Endothelial cell of umbilical vein (primary cell): ENCODE measurements at regions of chr15 and their contacts with region 1.

Region 1: GRCh38 chr15:77352887-77353286 is 67.0 kb downstream of the PEAK1 start:
- DNase-seq: no peak
- H3K4me3 ChIP-seq: no peak overlapping the region
- H3K27ac ChIP-seq: no peak overlapping the region
- H3K4me1 ChIP-seq: peaks cover 4% of the 10 kb centered on the region
- H3K27me3 ChIP-seq: no peaks in the 10 kb centered on the region
- CTCF ChIP-seq: no peak
- POLR2A ChIP-seq: no peak

Region 2: DNA sequence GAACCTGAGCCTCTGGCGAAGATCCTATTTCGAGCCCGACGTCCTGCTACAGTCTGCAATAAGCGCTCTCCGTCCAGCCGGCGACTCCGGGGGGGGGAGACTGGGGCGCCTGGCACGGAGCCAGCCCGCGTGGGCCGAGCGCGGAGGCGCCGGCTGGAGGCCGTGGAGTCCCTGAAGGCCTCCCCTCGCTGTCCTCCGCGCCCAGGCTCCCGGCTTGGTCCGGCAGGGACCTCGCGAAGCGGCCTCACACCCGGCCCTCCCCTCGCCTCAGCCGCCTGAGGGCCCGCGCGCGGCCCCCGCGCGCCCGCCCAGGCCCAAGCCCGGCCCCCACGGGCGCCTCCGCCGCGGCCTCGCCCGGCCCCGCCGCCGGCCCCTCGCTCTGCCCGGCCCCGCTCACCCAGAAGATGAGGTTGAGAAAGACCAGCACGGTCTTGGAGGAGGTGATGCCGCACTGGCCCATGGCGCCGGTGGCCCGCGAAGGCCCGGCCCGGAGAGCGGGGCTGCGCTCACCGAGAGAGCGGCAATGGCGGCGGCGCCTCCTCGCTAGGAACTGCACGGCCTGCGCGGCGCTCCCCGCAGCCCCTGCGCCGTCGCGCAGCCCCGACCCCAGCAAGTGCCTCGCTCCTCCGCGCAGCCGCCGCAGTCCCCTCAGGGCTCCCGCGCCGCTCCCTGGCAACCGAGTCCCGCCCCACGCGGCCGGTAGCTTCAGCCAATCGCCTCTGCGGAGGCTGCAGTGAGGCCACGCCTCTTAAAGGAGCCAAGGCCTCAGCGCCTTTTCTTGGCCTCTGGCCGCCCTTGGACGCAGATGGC is 282.2 kb before region 1 on chr15 and contains the start of gene TSPAN3:
- CTCF ChIA-PET with region 1: no interaction called
- POLR2A ChIA-PET with region 1: no interaction called
- dilution Hi-C with region 1: no loop called
- intact Hi-C with region 1: no loop called
- DNase-seq: peak; percentile 96
- H3K4me3 ChIP-seq: peak within 1 kb of the TSS; percentile 53 to 98 (median 90)
- H3K27ac ChIP-seq: peak within 1 kb of the TSS; percentile 81
- H3K4me1 ChIP-seq: peaks cover 35% of the 10 kb centered on the region
- H3K27me3 ChIP-seq: peaks cover 4% of the 10 kb centered on the region in 2 experiments
- CTCF ChIP-seq: no peak
- POLR2A ChIP-seq: peak; percentile 70
- total RNA-seq, gene TSPAN3: 202 and 215 TPM in 2 replicates

Region 3: DNA sequence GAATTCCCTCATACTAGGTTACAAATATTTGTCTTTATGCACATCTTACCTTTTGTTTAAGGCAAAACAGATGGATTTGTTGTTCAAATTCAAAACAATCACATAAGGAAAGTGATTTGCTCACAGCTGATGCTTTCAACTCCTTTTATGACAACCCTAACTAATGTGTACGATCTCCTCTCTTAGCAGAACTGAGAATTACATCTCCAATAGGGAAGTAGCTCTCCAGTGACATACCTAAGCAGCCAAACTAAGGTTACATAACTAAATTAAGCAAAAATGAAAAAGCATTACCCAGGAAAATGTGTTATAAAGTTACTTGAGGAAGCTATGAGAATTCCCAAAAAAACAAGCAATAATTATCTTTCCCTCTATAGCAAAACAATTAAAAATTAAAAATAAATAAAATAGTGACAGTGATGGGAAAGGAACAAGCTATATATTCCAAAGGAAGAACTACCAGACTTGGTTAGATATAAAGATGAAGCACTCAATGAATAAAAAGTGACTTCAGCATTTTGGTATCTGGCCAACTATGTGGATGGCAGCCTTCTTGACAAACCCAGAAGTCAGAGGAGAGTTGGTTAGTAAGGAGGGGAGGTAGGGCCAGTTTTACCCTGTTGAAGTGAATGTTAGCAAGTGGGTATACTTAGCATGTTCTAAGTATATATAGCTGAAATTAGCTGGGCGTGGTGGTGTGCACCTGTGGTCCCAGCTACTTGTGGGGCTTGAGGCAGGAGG is 34.6 kb after region 1 on chr15:
- CTCF ChIA-PET with region 1: no interaction called
- POLR2A ChIA-PET with region 1: no interaction called
- dilution Hi-C with region 1: no loop called
- intact Hi-C with region 1: no loop called
- DNase-seq: no peak
- H3K4me3 ChIP-seq: no peak overlapping the region
- H3K27ac ChIP-seq: no peak overlapping the region
- H3K4me1 ChIP-seq: peaks cover 2% of the 10 kb centered on the region
- H3K27me3 ChIP-seq: no peaks in the 10 kb centered on the region
- CTCF ChIP-seq: no peak
- POLR2A ChIP-seq: no peak

Region 4: GRCh38 chr15:77409259-77410156 is 56.6 kb after region 1 on chr15:
- CTCF ChIA-PET with region 1: no interaction called
- POLR2A ChIA-PET with region 1: no interaction called
- dilution Hi-C with region 1: no loop called
- intact Hi-C with region 1: loop called (anchors 10 kb)
- DNase-seq: no peak
- H3K4me3 ChIP-seq: no peak overlapping the region
- H3K27ac ChIP-seq: no peak overlapping the region
- H3K4me1 ChIP-seq: no peaks in the 10 kb centered on the region
- H3K27me3 ChIP-seq: no peaks in the 10 kb centered on the region
- CTCF ChIP-seq: no peak
- POLR2A ChIP-seq: no peak

Region 5: DNA sequence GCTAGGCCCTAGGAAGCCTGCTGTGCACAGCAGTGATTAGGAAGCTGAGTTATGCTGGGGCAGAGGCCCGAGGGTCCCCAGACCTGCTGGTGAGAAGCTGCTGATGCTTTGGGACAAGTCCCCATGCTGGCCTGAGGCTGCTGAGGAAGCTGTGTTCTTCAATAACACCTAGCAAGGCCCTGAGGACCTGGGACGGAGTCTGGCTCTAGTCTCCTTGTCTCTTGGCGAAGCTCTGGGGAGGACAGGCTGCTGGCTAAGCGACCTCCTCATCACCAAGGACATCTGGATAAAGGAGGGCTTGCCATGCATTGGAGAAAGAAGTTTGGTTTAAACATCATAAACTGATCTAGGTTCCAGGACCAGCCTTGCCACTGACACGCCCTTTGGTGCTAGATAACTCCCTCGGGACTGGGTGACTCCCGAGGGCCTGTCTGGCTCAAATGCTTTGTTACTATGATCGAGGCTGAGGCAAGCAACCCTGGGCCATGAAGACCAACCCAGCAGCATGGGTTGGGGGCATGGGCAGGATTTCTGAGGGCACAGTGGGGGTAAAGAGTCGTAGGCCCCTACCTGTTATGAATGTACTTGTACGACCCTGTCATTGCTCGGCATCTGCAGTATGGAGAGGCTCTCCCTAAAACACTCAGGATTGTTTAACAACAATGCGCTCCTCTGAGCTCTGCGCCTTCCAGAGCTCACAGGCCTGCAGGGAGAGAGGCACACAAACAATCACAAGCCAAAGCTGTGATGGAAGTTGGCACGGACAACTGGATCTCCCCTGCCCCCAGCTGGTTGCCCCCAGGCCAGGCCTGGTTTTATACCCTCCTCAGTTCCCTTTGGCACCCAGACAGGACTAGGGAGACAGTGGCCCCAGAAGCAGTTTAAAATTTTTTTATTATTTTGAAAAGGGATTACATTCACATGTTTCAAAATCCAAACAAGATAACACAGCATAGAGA is 215.4 kb after region 1 on chr15:
- CTCF ChIA-PET with region 1: no interaction called
- POLR2A ChIA-PET with region 1: no interaction called
- dilution Hi-C with region 1: no loop called
- intact Hi-C with region 1: no loop called
- DNase-seq: no peak
- H3K4me3 ChIP-seq: no peak overlapping the region
- H3K27ac ChIP-seq: no peak overlapping the region
- H3K4me1 ChIP-seq: no peaks in the 10 kb centered on the region
- H3K27me3 ChIP-seq: no peaks in the 10 kb centered on the region
- CTCF ChIP-seq: no peak
- POLR2A ChIP-seq: no peak

Region 6: DNA sequence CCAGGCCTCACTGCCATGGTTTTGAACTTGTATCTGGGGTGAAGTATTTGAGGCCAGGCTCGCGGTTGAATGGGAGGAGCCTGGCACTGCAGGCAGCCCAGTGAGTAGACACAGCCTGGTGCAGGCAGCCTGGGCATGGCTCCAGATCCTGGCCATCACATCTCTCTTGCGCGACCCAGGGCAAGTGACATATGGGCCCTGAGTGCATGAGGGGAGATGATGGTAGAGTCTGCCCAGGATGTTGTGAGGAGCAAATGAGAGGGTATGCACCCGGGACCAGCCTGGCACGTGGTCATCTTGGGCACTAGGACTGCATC is 621.2 kb after region 1 on chr15:
- CTCF ChIA-PET with region 1: no interaction called
- POLR2A ChIA-PET with region 1: no interaction called
- dilution Hi-C with region 1: no loop called
- intact Hi-C with region 1: no loop called
- DNase-seq: no peak
- H3K4me3 ChIP-seq: no peak overlapping the region
- H3K27ac ChIP-seq: no peak overlapping the region
- H3K4me1 ChIP-seq: peaks cover 2% of the 10 kb centered on the region
- H3K27me3 ChIP-seq: no peaks in the 10 kb centered on the region
- CTCF ChIP-seq: no peak
- POLR2A ChIP-seq: no peak